Activated CD8-positive, alpha-beta T cell treated with anti-CD3 and anti-CD28 coated beads for 36 hours (primary cell): ENCODE measurements at regions of chr11 and their contacts with region 1.

Region 1: GRCh38 chr11:128342511-128343134 is 244.7 kb downstream of the ETS1 start:
- DNase-seq: peak; percentile 89
- ATAC-seq: peak; percentile 81
- H3K4me3 Mint-ChIP-seq: peak overlapping the region; percentile 69
- H3K27ac Mint-ChIP-seq: peak overlapping the region; percentile 86
- H3K4me1 Mint-ChIP-seq: peaks cover 84% of the 10 kb centered on the region
- H3K27me3 Mint-ChIP-seq: no peaks in the 10 kb centered on the region
- CTCF ChIP-seq: no peak

Region 2: DNA sequence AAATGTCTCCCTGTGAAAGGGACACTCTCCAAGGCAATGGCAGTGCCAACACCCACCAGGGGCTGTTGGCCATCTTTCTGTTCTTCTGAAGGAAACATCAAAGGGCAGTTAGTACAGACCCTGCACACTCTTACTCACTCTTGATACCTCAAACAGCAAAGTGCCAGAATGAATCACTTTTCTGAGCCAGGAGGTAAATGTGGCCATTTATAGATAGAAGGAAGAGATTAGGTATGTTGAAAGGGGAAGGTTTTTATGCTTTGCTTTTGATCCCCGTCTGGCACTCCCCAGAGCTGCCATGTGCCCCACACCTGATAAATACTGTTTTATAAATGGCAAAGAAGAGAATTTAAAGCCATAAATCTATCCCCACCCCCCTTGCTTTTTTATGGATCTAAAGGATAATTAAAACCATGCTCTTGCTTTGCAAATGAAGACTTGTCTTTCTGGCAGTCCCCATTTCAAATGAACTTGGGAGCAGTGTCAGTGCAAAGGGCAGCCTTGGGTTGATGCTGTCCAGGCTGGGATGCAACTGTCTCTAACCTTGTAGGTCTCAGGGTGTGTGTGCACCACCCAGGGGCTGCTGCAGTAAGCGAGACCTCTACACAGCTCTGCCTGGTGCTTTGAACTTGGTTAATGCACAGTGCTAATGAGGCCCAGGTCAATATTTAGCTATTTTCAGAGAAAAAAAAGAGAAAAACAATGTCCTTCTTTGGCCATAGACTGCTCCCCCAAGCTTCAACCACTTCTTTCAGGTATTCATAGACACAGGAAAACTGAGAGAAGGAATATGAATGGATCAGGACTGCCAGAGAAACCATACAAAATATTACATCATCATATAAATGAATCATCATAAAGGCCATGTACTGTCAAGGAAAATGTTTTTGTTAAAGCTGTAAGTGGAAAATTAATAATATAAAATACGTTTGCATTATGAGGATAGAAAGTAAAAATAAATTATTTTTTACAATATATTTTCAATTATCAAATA is 37.3 kb after region 1 on chr11:
- CTCF ChIA-PET with region 1: interaction called, 4 read pairs
- POLR2A ChIA-PET with region 1: interaction called, 4 read pairs
- intact Hi-C with region 1: loop called (anchors 5 kb)
- DNase-seq: peak; percentile 67
- ATAC-seq: peak; percentile 94
- H3K4me3 Mint-ChIP-seq: no peak overlapping the region
- H3K27ac Mint-ChIP-seq: peak overlapping the region; percentile 80
- H3K4me1 Mint-ChIP-seq: peaks cover 45% of the 10 kb centered on the region
- H3K27me3 Mint-ChIP-seq: no peaks in the 10 kb centered on the region
- CTCF ChIP-seq: no peak